Uterus (tissue), 4 donors: ENCODE measurements at regions of chr7 and their contacts with region 1.

Region 1: GRCh38 chr7:43582503-43583423 is at the start of gene STK17A:
- DNase-seq: peak; percentile 87 to 93
- H3K4me3 ChIP-seq: peak within 1 kb of the TSS; percentile 65 to 70
- H3K27ac ChIP-seq: peak within 1 kb of the TSS; percentile 90 to 91
- H3K4me1 ChIP-seq: no peaks in the 10 kb centered on the region
- H3K27me3 ChIP-seq: no peaks in the 10 kb centered on the region
- CTCF ChIP-seq: peak; percentile 98 to 100 (median 100)
- POLR2A ChIP-seq: peak; percentile 40 to 76
- total RNA-seq, gene STK17A: 2.3 to 25.2 (median 7.5) TPM

Region 2: DNA sequence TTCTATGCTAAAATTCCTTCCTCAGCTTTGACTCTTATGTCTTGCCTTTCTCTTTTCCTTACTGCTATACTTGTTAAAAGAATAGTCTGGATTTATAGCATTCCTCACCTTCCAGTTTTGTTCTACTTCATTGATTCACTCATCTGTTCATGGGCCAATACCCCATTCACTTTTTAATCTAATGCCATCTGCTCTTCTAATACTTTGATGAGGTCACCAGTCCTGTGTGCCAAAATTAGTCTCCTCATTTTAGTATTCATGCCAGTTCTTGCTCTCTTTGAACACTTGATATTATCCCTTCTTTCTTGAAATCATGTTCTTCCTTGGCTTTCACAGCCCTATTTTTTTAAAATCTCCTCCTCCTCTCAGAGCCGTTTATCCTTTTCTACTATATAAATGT is 19.5 kb after region 1 on chr7:
- intact Hi-C with region 1: no loop called
- DNase-seq: no peak
- H3K4me3 ChIP-seq: no peak overlapping the region
- H3K27ac ChIP-seq: no peak overlapping the region
- H3K4me1 ChIP-seq: no peaks in the 10 kb centered on the region
- H3K27me3 ChIP-seq: no peaks in the 10 kb centered on the region
- CTCF ChIP-seq: no peak
- POLR2A ChIP-seq: no peak

Region 3: DNA sequence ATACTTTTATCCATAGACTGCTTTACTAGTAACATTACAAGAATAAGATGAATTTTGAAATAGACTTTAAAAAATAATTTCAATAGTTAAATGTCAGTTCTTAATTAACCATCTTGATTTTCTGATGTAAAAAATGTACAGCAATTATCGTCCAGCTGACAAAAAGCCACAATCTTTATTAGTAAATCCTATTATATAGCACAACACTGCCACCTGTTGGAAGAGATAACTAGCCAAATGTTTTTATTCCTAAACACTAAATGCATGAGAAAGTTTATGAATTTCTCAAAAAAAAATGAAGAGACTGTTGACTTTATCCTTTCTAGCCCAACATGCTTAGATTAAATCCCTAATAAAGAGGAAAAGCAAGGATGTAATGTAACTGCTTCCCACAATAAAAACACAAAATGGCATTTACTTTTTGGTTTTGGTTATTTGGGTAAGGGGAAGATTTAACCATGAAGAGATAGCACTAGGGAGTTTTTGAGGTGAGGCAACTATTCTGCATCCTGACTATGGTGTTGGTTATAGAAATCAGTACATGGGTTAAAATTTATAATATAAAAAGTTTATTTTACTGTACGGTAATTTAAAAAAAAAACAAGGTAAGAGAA is 138.5 kb after region 1 on chr7:
- intact Hi-C with region 1: loop called (anchors 5 kb)
- DNase-seq: no peak
- H3K4me3 ChIP-seq: no peak overlapping the region
- H3K27ac ChIP-seq: no peak overlapping the region
- H3K4me1 ChIP-seq: no peaks in the 10 kb centered on the region
- H3K27me3 ChIP-seq: no peaks in the 10 kb centered on the region
- CTCF ChIP-seq: peak; percentile 65 to 71 (median 68)
- POLR2A ChIP-seq: no peak

Region 4: DNA sequence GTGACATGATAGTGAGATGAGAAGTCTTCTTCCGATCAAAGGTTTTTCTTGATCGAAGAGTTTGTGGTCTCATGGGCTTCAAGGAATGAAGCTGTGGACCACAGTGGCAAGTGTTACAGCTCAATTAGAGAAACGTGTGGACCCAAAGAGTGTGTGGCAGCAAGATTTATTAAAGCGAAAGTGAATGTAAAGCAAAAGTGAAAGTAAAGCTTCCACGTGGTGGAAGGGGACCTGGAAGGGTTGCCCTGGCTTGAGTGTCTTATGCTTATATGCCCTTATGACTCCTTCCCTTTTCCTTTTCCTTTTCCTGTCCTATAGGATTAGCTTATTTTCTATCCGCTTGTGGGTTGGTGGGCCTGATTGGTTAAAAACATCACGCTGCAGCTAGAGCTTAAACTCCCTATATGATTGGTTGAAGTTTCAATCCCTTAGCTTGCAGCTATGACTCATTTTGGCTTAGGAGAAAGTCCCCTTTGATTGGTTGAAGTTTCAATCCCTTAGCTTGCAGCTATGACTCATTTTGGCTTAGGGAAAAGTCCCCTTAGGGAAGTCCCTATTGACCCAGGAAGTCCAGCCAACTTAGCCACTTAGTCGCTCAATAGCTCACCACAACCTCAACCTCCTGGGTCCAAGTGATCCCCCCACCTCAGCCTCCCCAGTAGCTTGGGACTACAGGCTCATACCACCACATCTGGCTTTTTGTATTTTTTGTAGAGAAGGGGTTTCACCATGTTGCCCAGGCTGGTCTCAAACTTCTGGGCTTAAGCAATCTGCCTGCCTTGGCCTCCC is 251.9 kb after region 1 on chr7:
- intact Hi-C with region 1: loop called (anchors 10 kb)
- DNase-seq: no peak
- H3K4me3 ChIP-seq: peak overlapping the region in 1 of 2 donors; percentile 4
- H3K27ac ChIP-seq: no peak overlapping the region
- H3K4me1 ChIP-seq: no peaks in the 10 kb centered on the region
- H3K27me3 ChIP-seq: no peaks in the 10 kb centered on the region
- CTCF ChIP-seq: no peak
- POLR2A ChIP-seq: no peak